Stomach (tissue), 19 donors: ENCODE measurements at regions of chr16 and their contacts with region 1.

Region 1: DNA sequence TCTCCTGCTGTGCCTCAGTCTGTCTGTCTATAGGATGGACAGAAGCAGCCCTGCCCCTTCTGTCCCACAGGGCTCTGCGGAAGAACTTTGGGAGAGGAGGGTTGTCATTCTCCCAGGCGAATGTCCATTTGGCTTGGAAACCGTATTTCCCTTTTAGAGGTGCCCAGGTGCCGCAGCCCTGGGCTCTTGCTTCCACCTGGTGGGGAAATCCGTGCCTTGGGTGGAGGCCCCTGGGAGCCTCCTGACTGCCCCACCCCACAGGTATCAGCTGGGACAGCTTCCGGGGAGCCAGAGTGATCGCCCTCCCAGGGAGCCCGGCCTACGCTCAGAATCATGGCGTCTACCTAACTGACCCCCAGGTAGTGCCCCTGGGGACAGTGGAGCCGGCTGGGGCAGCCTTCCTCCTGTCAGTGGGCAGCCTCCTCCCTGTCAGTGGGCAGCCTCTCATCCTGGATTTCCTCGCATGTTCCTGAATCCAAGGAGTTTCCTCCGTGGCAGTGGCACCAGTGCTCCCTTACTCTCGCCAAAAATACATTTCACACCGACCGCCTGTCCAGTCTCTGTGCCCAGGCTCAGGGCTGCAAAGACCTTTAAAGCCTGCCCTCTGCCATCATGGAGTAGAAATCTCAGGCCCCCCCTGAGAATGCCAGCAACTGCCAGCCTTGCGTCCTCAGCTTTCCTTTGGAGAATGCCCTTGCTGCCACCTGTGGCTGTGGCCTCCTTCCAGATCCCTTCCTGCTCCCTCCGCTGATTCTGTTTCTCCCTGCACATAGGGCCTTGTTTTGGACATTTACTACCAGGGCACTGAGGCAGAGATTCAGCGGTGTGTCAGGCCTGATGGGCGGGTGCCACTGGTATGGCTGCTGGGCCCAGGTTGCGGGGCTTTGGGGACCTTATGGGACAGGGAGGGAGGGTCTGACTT is 13.0 kb downstream of the FCSK start:
- DNase-seq: no peak
- H3K4me3 ChIP-seq: no peak overlapping the region
- H3K27ac ChIP-seq: no peak overlapping the region
- H3K4me1 ChIP-seq: no peaks in the 10 kb centered on the region
- H3K27me3 ChIP-seq: no peaks in the 10 kb centered on the region
- CTCF ChIP-seq: peak in 1 of 7 experiments; percentile 7
- EP300 ChIP-seq: no peak
- POLR2A ChIP-seq: no peak

Region 2: GRCh38 chr16:70375636-70376611 is 91.5 kb before region 1 on chr16:
- intact Hi-C with region 1: no loop called
- DNase-seq: no peak
- H3K4me3 ChIP-seq: no peak overlapping the region
- H3K27ac ChIP-seq: peak overlapping the region in 3 of 5 donors; percentile 33 to 53 (median 52)
- H3K4me1 ChIP-seq: peaks cover 10 to 37% (median 32%) of the 10 kb centered on the region in 4 donors
- H3K27me3 ChIP-seq: no peaks in the 10 kb centered on the region
- CTCF ChIP-seq: no peak
- EP300 ChIP-seq: no peak
- POLR2A ChIP-seq: no peak

Region 3: GRCh38 chr16:70391881-70392481 is 75.4 kb before region 1 on chr16:
- intact Hi-C with region 1: loop called (anchors 5 kb)
- DNase-seq: no peak
- H3K4me3 ChIP-seq: no peak overlapping the region
- H3K27ac ChIP-seq: no peak overlapping the region
- H3K4me1 ChIP-seq: peaks cover 0 to 6% (median 0%) of the 10 kb centered on the region in 4 donors
- H3K27me3 ChIP-seq: no peaks in the 10 kb centered on the region
- CTCF ChIP-seq: no peak
- EP300 ChIP-seq: no peak
- POLR2A ChIP-seq: no peak

Region 4: DNA sequence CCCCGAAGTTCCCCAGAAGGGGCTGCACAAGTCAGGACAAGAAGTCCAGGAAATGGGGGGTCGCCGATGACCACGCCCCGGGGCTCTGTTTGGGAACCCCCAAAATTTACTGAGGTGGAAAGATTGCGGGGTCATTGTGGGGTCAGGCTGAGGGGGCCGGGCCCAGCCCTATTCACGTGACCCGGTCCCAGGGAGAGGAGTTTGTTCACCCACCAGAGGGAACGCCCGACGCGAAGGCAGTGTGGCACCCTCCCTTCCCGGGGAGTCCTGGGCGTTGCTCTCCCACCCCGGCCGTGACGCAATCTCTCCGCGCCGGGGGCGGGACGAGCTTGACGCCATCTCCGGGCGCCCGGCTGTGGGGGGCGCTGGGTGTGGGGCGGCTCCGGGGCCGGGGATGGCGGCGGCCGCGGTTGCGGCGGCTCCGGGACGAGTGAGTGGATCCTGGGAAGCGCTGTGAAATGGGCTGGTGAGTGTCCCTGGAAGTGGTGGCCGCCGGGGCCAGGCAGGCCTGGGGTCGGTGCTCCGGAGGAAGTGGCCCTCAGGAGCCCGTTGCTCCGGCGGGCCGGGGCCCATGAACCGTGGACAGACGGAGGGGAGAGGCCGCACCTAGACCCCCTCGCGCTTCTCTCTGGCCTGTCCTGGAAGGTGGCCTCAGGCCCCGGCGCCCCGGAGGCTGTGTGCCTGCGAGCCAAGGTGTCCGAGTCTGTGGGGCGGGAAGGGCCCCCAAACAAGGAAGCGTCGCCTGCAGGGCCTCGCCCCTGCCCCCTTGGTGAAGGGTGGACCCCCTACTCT is 1378.5 kb after region 1 on chr16 and contains the start of gene ATXN1L:
- intact Hi-C with region 1: no loop called
- DNase-seq: peak; percentile 93 to 97
- H3K4me3 ChIP-seq: peak within 1 kb of the TSS; percentile 97 to 100 (median 99)
- H3K27ac ChIP-seq: peak within 1 kb of the TSS; percentile 88 to 96 (median 92)
- H3K4me1 ChIP-seq: peaks cover 3 to 25% (median 23%) of the 10 kb centered on the region in 4 donors
- H3K27me3 ChIP-seq: no peaks in the 10 kb centered on the region
- CTCF ChIP-seq: peak in 1 of 7 experiments; percentile 9
- EP300 ChIP-seq: no peak
- POLR2A ChIP-seq: peak in 2 of 4 donors; percentile 76 to 80
- total RNA-seq, gene ATXN1L: 8.5 to 33.4 (median 16.9) TPM